ENCODE measurements at regions of chr12 and their contacts with region 1.

Region 1: DNA sequence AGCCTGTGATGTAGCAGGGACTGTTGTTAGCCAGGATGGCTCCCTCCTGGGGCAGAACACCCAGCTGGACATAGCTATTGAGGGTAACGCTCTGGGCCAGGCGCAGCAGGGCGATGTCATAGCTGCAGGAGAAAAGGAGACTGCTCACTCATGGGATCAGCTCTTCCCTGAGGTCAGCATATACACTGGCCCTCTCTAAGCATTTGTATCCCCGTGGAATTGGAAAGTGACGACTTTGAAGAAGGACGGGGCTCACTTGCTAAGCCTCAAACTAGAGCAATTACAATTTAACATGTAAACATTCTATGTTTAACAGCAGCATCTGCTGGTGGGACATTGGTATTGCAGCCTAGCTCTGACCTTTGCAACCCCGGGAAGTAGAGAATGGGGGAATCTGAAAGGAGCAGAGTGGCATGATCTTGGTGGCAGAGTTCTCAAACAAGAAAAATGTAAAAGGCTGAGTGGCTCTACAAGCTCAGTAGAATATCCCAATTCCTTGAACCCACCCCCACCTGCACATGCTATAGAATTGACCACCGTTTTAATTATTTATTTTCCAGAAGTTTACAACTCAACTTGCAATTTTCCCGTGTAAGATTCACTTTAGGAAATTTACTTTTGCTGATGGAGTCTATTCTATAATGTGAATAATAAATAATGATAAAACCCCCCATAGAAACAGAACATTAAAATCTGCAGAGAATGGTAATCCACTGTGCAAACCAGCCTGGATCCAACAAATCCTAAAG is 5.0 kb downstream of the CELA1 start:
- DNase-seq: no peak
- H3K4me3 ChIP-seq: peak overlapping the region; percentile 41
- CTCF ChIP-seq: peak; percentile 89

Region 2: GRCh38 chr12:50986966-50987737 is 354.3 kb before region 1 on chr12:
- CTCF ChIA-PET with region 1: interaction called, 14 read pairs
- POLR2A ChIA-PET with region 1: no interaction called
- DNase-seq: no peak
- H3K4me3 ChIP-seq: no peak overlapping the region
- CTCF ChIP-seq: peak; percentile 57

Region 3: GRCh38 chr12:51083126-51083833 is 258.2 kb before region 1 on chr12 and contains the start of gene CSRNP2:
- CTCF ChIA-PET with region 1: interaction called, 6 read pairs
- POLR2A ChIA-PET with region 1: interaction called, 19 read pairs
- DNase-seq: peak; percentile 64
- H3K4me3 ChIP-seq: peak within 1 kb of the TSS; percentile 86
- CTCF ChIP-seq: no peak

Region 4: GRCh38 chr12:51253276-51253675 is 88.2 kb before region 1 on chr12:
- CTCF ChIA-PET with region 1: interaction called, 15 read pairs
- POLR2A ChIA-PET with region 1: no interaction called
- DNase-seq: no peak
- H3K4me3 ChIP-seq: no peak overlapping the region
- CTCF ChIP-seq: no peak

Region 5: GRCh38 chr12:51293696-51294095 is 47.7 kb before region 1 on chr12:
- CTCF ChIA-PET with region 1: interaction called, 10 read pairs
- POLR2A ChIA-PET with region 1: no interaction called
- DNase-seq: no peak
- H3K4me3 ChIP-seq: no peak overlapping the region
- CTCF ChIP-seq: no peak

Region 6: GRCh38 chr12:51361161-51362016 is 20.0 kb after region 1 on chr12:
- CTCF ChIA-PET with region 1: interaction called, 19 read pairs
- POLR2A ChIA-PET with region 1: no interaction called
- DNase-seq: no peak
- H3K4me3 ChIP-seq: no peak overlapping the region
- CTCF ChIP-seq: no peak

Measured in AG04449 (cell line).